ENCODE measurements at regions of chr3 and their contacts with region 1.

Region 1: GRCh38 chr3:14467814-14468620 is 65.6 kb downstream of the SLC6A6 start:
- DNase-seq: no peak

Region 2: GRCh38 chr3:13895155-13896105 is 572.6 kb before region 1 on chr3:
- intact Hi-C with region 1: loop called in 1 of 2 experiments (anchors 2 kb)
- DNase-seq: peak; percentile 98

Region 3: GRCh38 chr3:14203521-14204079 is 264.4 kb before region 1 on chr3:
- intact Hi-C with region 1: loop called (anchors 5 kb)
- DNase-seq: no peak

Region 4: GRCh38 chr3:14261229-14261628 is 206.8 kb before region 1 on chr3:
- intact Hi-C with region 1: loop called (anchors 2 to 5 kb)
- DNase-seq: peak; percentile 95